ENCODE measurements at regions of chr4 and their contacts with region 1.

Region 1: GRCh38 chr4:27684610-27685011 is 824.0 kb downstream of the STIM2 start:
- DNase-seq: peak; percentile 74
- H3K4me3 Mint-ChIP-seq: no peak overlapping the region
- H3K27ac Mint-ChIP-seq: no peak overlapping the region
- H3K4me1 Mint-ChIP-seq: no peaks in the 10 kb centered on the region
- H3K27me3 Mint-ChIP-seq: peaks cover 11% of the 10 kb centered on the region
- CTCF ChIP-seq: peak; percentile 88

Region 2: GRCh38 chr4:26731351-26732035 is 953.1 kb before region 1 on chr4:
- CTCF ChIA-PET with region 1: no interaction called
- POLR2A ChIA-PET with region 1: no interaction called
- intact Hi-C with region 1: no loop called
- DNase-seq: no peak
- H3K4me3 Mint-ChIP-seq: no peak overlapping the region
- H3K27ac Mint-ChIP-seq: no peak overlapping the region
- H3K4me1 Mint-ChIP-seq: no peaks in the 10 kb centered on the region
- H3K27me3 Mint-ChIP-seq: no peaks in the 10 kb centered on the region
- CTCF ChIP-seq: no peak

Region 3: DNA sequence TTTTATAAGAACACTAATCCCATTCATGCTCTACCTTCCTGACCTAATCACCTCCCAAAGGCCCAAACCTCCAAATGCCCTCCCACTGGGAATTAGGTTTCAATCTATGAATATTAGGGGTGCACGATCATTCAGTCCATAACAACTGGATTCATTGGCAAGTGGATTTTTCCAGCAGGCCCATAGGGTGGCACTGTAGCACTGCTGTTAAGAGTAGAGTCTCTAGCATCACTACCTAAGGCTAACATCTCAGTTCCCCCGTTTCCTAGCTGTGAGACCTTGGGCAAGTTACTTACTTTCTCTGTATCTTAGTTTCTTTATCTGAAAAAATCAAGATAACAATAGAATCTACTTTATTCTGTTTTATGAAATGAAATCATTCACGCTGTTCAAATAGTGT is 508.2 kb before region 1 on chr4:
- CTCF ChIA-PET with region 1: interaction called, 10 read pairs
- POLR2A ChIA-PET with region 1: no interaction called
- intact Hi-C with region 1: loop called (anchors 1 kb)
- DNase-seq: peak; percentile 60
- H3K4me3 Mint-ChIP-seq: no peak overlapping the region
- H3K27ac Mint-ChIP-seq: no peak overlapping the region
- H3K4me1 Mint-ChIP-seq: peaks cover 5% of the 10 kb centered on the region
- H3K27me3 Mint-ChIP-seq: no peaks in the 10 kb centered on the region
- CTCF ChIP-seq: peak; percentile 69

Region 4: DNA sequence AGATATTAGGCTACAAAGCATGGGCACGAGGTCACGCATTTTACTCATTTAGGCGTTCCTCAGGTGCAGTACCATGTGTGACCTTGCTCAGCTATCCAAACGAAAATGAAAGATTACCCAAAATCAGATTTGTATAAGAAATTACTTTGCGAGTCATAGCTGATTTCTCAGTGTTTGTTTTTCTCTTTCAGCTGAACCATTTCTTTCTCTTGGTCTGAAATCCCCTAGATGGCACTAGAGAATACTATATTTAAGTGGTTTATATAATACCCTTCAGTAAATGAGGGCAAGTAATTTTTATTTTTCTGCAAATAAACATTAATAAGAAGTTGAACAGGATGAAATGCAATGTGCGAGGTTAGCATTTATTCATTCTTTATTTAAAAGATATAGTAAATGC is 327.3 kb before region 1 on chr4:
- CTCF ChIA-PET with region 1: interaction called, 14 read pairs
- POLR2A ChIA-PET with region 1: no interaction called
- intact Hi-C with region 1: loop called (anchors 2 kb)
- DNase-seq: peak; percentile 30
- H3K4me3 Mint-ChIP-seq: no peak overlapping the region
- H3K27ac Mint-ChIP-seq: no peak overlapping the region
- H3K4me1 Mint-ChIP-seq: peaks cover 10% of the 10 kb centered on the region
- H3K27me3 Mint-ChIP-seq: no peaks in the 10 kb centered on the region
- CTCF ChIP-seq: peak; percentile 32

Region 5: GRCh38 chr4:27666943-27667342 is 17.7 kb before region 1 on chr4:
- CTCF ChIA-PET with region 1: interaction called, 30 read pairs
- POLR2A ChIA-PET with region 1: no interaction called
- intact Hi-C with region 1: no loop called
- DNase-seq: peak; percentile 40
- H3K4me3 Mint-ChIP-seq: no peak overlapping the region
- H3K27ac Mint-ChIP-seq: no peak overlapping the region
- H3K4me1 Mint-ChIP-seq: no peaks in the 10 kb centered on the region
- H3K27me3 Mint-ChIP-seq: no peaks in the 10 kb centered on the region
- CTCF ChIP-seq: no peak

Region 6: DNA sequence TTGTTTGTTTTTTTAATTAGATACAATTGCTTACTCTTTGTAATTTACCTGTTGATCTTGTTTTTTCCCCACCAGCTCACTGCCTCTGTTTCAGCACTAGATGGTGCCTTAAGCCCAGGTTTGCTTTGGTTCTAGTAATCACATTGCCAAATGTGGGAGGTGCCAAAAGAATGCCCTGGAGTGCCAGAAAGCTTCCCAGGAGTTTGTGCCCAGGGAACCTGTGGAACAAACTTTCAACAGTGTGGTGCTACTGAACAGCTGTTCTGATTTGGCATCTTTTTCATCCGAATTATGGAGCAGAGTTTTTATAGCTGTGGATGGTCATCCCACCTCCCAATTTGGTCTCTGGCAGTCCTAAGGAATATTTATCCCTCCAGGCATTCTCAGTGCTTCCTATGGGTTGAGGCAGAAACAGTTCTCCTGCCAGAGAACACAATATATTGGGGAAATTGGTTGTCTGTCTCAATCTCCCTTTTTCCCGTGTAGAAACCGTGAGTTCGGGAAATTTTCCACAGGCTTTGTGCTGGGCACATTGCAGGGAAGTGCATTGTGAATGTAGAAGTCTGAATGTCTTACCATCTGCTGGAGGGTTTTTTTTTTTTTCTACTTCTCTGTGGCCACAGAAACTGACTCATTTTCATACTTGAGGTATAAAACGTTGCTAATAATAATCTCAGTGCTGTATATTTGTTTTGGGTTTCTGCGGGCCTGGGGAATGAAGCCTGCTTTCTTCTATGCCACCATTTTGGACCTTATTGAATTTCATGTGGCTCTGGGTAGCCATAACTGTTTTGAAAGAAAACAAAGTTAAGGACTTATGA is 177.0 kb after region 1 on chr4:
- CTCF ChIA-PET with region 1: interaction called, 3 read pairs
- POLR2A ChIA-PET with region 1: no interaction called
- intact Hi-C with region 1: loop called (anchors 2 kb)
- DNase-seq: peak; percentile 83
- H3K4me3 Mint-ChIP-seq: no peak overlapping the region
- H3K27ac Mint-ChIP-seq: no peak overlapping the region
- H3K4me1 Mint-ChIP-seq: peaks cover 11% of the 10 kb centered on the region
- H3K27me3 Mint-ChIP-seq: no peaks in the 10 kb centered on the region
- CTCF ChIP-seq: peak; percentile 66

Region 7: DNA sequence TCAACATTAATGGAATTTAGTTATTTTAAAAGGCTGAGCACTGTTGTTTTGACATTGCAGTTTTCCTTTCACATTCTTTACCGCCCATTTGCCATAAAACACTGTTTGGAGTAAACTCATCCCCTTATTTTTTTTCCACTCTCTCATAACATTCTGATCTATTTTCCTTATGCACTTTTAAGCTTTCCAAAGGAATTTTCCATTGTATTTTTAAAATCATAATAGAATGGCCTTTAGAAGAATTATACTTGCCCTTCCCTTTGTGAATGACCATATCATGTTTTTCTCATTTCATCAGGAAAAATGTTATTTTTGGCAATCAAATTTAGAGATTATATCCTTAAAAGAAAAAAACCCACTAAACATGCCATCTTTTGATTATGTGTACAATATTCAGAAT is 250.3 kb after region 1 on chr4:
- CTCF ChIA-PET with region 1: no interaction called
- POLR2A ChIA-PET with region 1: no interaction called
- intact Hi-C with region 1: no loop called
- DNase-seq: no peak
- H3K4me3 Mint-ChIP-seq: no peak overlapping the region
- H3K27ac Mint-ChIP-seq: no peak overlapping the region
- H3K4me1 Mint-ChIP-seq: no peaks in the 10 kb centered on the region
- H3K27me3 Mint-ChIP-seq: no peaks in the 10 kb centered on the region
- CTCF ChIP-seq: no peak

Region 8: GRCh38 chr4:28225050-28225449 is 540.4 kb after region 1 on chr4:
- CTCF ChIA-PET with region 1: interaction called, 3 read pairs
- POLR2A ChIA-PET with region 1: no interaction called
- intact Hi-C with region 1: loop called (anchors 1 kb)
- DNase-seq: peak; percentile 54
- H3K4me3 Mint-ChIP-seq: no peak overlapping the region
- H3K27ac Mint-ChIP-seq: no peak overlapping the region
- H3K4me1 Mint-ChIP-seq: no peaks in the 10 kb centered on the region
- H3K27me3 Mint-ChIP-seq: no peaks in the 10 kb centered on the region
- CTCF ChIP-seq: peak; percentile 49

Measured in MCF 10A (cell line).